ENCODE measurements at regions of chr6 and their contacts with region 1.

Region 1: DNA sequence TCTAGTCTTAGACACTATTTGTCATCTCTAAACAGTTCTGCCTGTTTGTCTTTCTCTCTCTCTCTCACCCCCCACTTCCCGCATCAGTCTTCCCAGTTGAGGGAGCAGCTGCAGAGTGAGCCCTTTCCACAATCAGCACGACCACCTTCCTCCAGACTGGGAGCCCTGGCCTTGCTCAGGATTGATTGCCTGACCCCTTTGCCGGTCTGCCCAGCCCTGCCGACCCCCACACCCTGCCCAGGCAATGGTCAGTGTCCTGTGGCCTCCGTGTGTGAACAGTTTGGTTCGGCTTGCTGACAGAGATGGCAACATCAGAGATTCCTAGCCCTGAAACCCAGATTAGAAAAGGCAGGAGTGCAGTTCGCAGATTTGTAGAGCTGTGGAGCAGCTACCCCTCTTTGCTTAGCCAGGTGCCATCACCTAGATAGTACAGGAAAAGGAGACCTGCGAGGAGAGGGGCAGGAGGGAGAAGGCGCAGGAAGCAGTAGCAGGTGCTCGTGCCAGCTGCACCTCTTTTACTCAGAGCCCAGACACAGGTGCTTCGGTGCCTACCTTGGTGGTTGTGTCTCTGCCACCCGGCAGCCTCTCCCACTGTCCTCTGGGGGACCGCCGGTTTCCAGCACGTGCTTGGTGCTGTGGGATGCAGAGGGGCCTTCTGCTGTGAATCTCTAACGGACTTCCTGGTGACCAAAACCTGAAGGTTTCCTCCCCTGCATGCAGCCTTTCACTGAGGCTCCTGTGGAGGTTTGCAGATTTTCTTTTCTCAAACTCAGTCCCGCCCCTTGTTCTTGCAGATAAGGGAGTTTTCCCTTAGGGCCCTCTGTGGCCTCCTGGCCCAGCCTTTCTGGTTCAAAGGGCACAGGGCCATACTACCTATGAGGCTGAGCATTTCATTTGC is 92.4 kb downstream of the SCML4 start:
- DNase-seq: no peak
- H3K4me3 Mint-ChIP-seq: peak overlapping the region; percentile 68
- H3K27ac Mint-ChIP-seq: no peak overlapping the region
- H3K4me1 Mint-ChIP-seq: peaks cover 48% of the 10 kb centered on the region
- H3K27me3 Mint-ChIP-seq: peaks cover 37% of the 10 kb centered on the region

Region 2: GRCh38 chr6:107712665-107713551 is 18.8 kb before region 1 on chr6:
- intact Hi-C with region 1: loop called (anchors 1 kb)
- DNase-seq: no peak
- H3K4me3 Mint-ChIP-seq: peak overlapping the region; percentile 34
- H3K27ac Mint-ChIP-seq: peak overlapping the region; percentile 64
- H3K4me1 Mint-ChIP-seq: peaks cover 43% of the 10 kb centered on the region
- H3K27me3 Mint-ChIP-seq: peaks cover 13% of the 10 kb centered on the region

Region 3: GRCh38 chr6:107786709-107787588 is 55.3 kb after region 1 on chr6:
- intact Hi-C with region 1: loop called (anchors 5 kb)
- DNase-seq: peak; percentile 41
- H3K4me3 Mint-ChIP-seq: peak overlapping the region; percentile 60
- H3K27ac Mint-ChIP-seq: no peak overlapping the region
- H3K4me1 Mint-ChIP-seq: peaks cover 45% of the 10 kb centered on the region
- H3K27me3 Mint-ChIP-seq: peaks cover 7% of the 10 kb centered on the region

Region 4: DNA sequence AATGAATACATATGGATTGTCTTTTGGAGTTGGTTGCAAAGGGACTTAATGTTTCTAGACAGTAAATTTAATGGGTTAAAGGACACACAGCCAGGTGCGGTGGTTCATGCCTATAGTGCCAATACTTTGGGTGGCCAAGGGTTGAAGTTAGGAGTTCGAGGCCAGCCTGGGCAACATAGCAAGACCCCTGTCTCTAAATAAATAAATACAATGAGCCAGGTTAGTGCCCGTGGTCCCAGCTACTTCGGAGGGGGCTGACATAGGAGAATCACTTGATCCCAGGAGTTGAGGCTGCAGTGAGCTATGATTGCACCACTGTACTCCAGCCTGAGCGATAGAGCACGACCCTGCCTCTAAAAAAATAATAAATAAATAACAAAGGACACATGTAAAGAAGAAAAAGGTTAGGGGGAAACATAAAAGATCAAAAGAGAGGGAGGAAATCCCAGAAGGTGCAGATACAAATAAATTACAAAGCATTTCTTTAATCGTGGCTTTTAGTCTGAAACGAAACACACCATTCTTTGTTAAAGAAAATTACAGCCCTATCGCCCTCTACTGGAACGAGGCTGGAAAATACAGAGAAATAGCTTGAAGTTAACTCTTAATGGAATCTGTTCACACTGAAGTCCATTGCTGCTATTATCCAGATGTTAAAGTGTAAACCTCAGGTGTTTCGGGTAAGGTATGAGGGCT is 135.1 kb after region 1 on chr6:
- intact Hi-C with region 1: no loop called
- DNase-seq: no peak
- H3K4me3 Mint-ChIP-seq: no peak overlapping the region
- H3K27ac Mint-ChIP-seq: no peak overlapping the region
- H3K4me1 Mint-ChIP-seq: peaks cover 12% of the 10 kb centered on the region
- H3K27me3 Mint-ChIP-seq: peaks cover 6% of the 10 kb centered on the region

Measured in activated T-helper 2 cell treated with anti-CD3 and anti-CD28 coated beads, Interferon-gamma antibody, Interleukin-2, Interleukin-4, amounts not matched to agents 10 μg/mL and 5 μg/mL and 100 μg/mL, durations not matched to agents 14 hours and 24 hours and 36 hours (primary cell).